ENCODE measurements at regions of chr2 and their contacts with region 1.

Region 1: GRCh38 chr2:20097879-20098714 is 46.7 kb upstream of the LAPTM4A start:
- H3K4me3 Mint-ChIP-seq: no peak overlapping the region
- H3K27ac Mint-ChIP-seq: no peak overlapping the region
- H3K4me1 Mint-ChIP-seq: peaks cover 9% of the 10 kb centered on the region
- H3K27me3 Mint-ChIP-seq: peaks cover 4% of the 10 kb centered on the region

Region 2: DNA sequence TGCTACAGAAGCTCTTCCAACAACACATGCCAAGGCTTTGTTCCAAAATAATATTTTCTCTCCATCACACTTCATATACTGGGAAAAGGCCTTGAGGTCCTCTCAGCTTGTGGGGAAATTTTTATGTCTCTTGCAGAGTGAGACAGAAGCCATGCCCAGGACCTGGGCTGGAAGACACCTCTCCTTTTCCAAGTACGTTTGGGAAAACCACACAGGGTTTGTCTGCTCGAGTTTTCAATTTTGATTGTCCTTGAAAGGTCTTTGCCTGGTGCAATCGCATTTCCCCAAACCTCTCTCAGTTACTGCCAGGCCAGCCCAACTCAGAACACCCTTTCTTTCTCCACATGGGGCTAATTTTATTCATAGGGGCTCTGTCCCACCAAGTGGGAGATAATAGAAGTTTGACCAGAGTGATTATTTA is 1011.9 kb before region 1 on chr2:
- intact Hi-C with region 1: no loop called
- H3K4me3 Mint-ChIP-seq: no peak overlapping the region
- H3K27ac Mint-ChIP-seq: no peak overlapping the region
- H3K4me1 Mint-ChIP-seq: no peaks in the 10 kb centered on the region
- H3K27me3 Mint-ChIP-seq: no peaks in the 10 kb centered on the region

Region 3: DNA sequence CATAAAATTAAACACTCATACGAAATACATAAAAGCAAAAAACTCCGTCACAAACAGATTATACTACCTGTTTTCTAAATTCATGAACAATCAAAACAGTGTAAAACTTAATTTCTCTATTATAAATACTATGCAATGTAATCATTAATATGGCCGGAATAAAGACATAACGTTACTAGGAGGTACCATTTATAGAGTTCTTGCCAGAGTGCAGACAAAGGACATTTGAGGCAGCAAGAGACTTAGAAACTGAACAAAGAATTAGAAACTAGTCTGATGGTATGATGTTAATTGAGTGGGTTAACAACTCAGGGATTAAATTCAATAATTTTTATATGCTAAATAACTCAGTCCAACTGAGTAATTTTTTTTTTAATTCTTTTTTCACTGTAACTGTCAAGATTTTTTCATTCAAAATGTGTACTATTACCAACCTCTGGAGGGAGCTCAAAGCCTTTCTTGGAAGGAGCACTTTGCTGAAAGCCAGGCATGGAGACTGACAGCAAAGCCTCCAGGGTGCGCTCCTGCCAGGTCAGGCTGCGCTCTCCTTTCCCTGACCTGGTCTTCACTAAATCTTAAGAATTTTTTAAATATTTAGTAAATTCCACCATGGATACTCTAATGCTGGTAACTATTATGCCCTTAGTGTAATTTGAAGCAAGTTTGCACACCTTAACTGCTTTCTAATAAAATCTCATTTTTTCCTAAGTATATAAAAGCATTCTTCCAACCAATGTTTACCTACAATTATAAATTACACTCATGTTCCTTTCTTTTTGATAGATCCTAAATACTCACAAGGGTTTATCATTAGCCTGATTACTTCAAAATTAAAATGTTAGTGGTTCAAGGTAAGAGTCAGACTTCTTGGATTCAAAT is 142.3 kb before region 1 on chr2:
- intact Hi-C with region 1: loop called (anchors 1 kb)
- H3K4me3 Mint-ChIP-seq: no peak overlapping the region
- H3K27ac Mint-ChIP-seq: no peak overlapping the region
- H3K4me1 Mint-ChIP-seq: no peaks in the 10 kb centered on the region
- H3K27me3 Mint-ChIP-seq: no peaks in the 10 kb centered on the region

Region 4: DNA sequence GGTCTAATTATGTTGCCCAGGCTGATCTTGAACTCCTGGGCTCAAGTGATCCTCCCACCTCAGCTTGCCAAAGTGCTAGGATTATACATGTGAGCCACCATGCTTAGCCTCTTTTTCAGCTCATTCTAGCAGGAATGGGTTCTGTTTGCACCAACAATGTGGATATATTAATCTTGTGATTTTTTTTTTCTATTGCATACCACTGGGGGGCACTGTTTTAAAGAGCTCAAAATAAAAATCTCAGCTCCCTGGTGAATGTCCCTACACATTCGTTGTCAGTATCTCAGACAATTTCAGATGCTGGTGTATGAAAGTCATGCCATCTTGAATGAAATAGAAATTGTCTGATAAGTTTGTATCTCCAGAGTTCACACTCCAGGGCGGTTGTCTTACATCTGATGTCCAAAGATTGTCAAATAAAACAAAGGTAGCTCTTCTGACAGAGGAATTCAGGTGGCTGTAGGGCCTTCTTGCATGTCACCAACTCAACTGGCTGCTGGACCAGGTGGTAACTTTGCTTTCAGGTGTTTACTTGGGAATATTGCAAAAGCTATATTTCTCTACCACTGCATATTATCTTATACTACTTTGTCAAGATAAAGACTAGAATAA is 82.5 kb before region 1 on chr2:
- intact Hi-C with region 1: loop called (anchors 1 kb)
- H3K4me3 Mint-ChIP-seq: no peak overlapping the region
- H3K27ac Mint-ChIP-seq: no peak overlapping the region
- H3K4me1 Mint-ChIP-seq: peaks cover 9% of the 10 kb centered on the region
- H3K27me3 Mint-ChIP-seq: peaks cover 40% of the 10 kb centered on the region

Region 5: GRCh38 chr2:20057268-20057667 is 40.8 kb before region 1 on chr2:
- intact Hi-C with region 1: loop called (anchors 5 kb)
- H3K4me3 Mint-ChIP-seq: no peak overlapping the region
- H3K27ac Mint-ChIP-seq: no peak overlapping the region
- H3K4me1 Mint-ChIP-seq: no peaks in the 10 kb centered on the region
- H3K27me3 Mint-ChIP-seq: peaks cover 39% of the 10 kb centered on the region

Region 6: DNA sequence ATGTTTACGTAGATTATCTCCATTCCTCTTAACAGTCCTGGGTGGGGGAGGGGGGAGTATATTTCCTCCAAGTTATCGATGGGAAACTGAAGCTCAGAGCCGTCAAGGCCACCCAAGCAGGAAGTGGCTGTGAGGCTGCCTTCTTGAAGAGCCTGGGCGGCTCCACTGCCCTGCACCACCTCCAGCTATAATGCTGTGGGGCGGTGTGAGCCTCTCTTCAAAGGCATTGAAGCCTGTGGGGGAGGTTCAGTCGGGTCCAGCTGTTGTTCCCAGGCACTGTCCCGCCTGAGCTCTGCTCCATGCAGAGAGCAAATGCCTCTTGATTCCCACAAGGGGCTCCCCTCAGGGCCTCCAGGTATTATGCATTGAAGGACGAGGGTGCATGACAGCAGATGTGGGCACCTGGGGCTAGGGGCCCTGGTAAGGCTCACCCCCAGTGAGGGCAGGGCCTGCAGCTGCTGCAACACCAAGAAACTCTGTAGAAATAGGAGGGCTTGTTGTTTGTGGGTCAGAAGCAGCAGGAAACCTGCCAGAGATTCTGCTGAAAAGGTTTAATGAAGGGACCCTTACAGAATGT is 17.2 kb before region 1 on chr2:
- intact Hi-C with region 1: no loop called
- H3K4me3 Mint-ChIP-seq: no peak overlapping the region
- H3K27ac Mint-ChIP-seq: no peak overlapping the region
- H3K4me1 Mint-ChIP-seq: no peaks in the 10 kb centered on the region
- H3K27me3 Mint-ChIP-seq: no peaks in the 10 kb centered on the region